Psoas muscle (tissue), 8 donors: ENCODE measurements at regions of chr6 and their contacts with region 1.

Region 1: GRCh38 chr6:121849477-121849876 is 414.0 kb downstream of the GJA1 start:
- DNase-seq: no peak
- ATAC-seq: peak; percentile 71 to 88 (median 82)
- H3K4me3 ChIP-seq: no peak overlapping the region
- H3K27ac ChIP-seq: no peak overlapping the region
- H3K4me1 ChIP-seq: no peaks in the 10 kb centered on the region
- H3K27me3 ChIP-seq: no peaks in the 10 kb centered on the region
- CTCF ChIP-seq: peak; percentile 73

Region 2: GRCh38 chr6:121652726-121653623 is 196.5 kb before region 1 on chr6:
- intact Hi-C with region 1: loop called in 1 of 2 experiments (anchors 5 kb)
- DNase-seq: no peak
- ATAC-seq: peak in 1 of 4 donors; percentile 68
- H3K4me3 ChIP-seq: no peak overlapping the region
- H3K27ac ChIP-seq: peak overlapping the region; percentile 32
- H3K4me1 ChIP-seq: no peaks in the 10 kb centered on the region
- H3K27me3 ChIP-seq: no peaks in the 10 kb centered on the region
- CTCF ChIP-seq: no peak

Region 3: DNA sequence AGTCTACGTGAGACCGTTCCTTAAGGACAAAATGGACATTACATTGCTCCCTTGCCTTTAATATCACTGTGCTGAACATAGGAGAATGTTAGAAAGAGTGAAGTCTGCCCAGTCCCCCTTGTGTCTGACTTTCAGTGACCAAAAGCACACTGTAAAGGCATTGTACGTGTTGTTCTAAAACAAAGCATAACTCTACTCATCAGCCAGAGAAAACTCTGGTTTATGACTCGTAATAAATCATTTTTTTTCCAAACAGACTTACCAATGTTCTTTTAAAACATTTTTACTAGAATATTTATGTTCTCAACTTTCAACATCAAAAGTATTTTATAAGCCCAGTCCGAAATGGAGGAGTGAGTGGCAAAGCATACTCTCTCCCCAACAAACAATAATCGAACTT is 151.6 kb before region 1 on chr6:
- intact Hi-C with region 1: no loop called
- DNase-seq: no peak
- ATAC-seq: no peak
- H3K4me3 ChIP-seq: no peak overlapping the region
- H3K27ac ChIP-seq: no peak overlapping the region
- H3K4me1 ChIP-seq: no peaks in the 10 kb centered on the region
- H3K27me3 ChIP-seq: no peaks in the 10 kb centered on the region
- CTCF ChIP-seq: no peak

Region 4: GRCh38 chr6:121780325-121781313 is 68.9 kb before region 1 on chr6:
- intact Hi-C with region 1: no loop called
- DNase-seq: peak; percentile 89 to 95
- ATAC-seq: peak; percentile 95 to 98 (median 96)
- H3K4me3 ChIP-seq: peak overlapping the region; percentile 26
- H3K27ac ChIP-seq: peak overlapping the region; percentile 87
- H3K4me1 ChIP-seq: peaks cover 10% of the 10 kb centered on the region
- H3K27me3 ChIP-seq: no peaks in the 10 kb centered on the region
- CTCF ChIP-seq: no peak

Region 5: GRCh38 chr6:122692131-122692598 is 842.7 kb after region 1 on chr6:
- intact Hi-C with region 1: no loop called
- DNase-seq: no peak
- ATAC-seq: no peak
- H3K4me3 ChIP-seq: no peak overlapping the region
- H3K27ac ChIP-seq: no peak overlapping the region
- H3K4me1 ChIP-seq: no peaks in the 10 kb centered on the region
- H3K27me3 ChIP-seq: no peaks in the 10 kb centered on the region
- CTCF ChIP-seq: no peak